ENCODE measurements at regions of chr6 and their contacts with region 1.

Region 1: GRCh38 chr6:150891888-150892485 is 26.5 kb downstream of the MTHFD1L start:
- DNase-seq: peak; percentile 47 to 79
- ATAC-seq: peak; percentile 62 to 79 (median 75)
- H3K4me3 ChIP-seq: no peak overlapping the region
- H3K27ac ChIP-seq: no peak overlapping the region
- H3K4me1 ChIP-seq: peaks cover 0 to 22% (median 11%) of the 10 kb centered on the region in 9 donors
- H3K27me3 ChIP-seq: no peaks in the 10 kb centered on the region
- CTCF ChIP-seq: peak; percentile 74 to 93 (median 86)

Region 2: DNA sequence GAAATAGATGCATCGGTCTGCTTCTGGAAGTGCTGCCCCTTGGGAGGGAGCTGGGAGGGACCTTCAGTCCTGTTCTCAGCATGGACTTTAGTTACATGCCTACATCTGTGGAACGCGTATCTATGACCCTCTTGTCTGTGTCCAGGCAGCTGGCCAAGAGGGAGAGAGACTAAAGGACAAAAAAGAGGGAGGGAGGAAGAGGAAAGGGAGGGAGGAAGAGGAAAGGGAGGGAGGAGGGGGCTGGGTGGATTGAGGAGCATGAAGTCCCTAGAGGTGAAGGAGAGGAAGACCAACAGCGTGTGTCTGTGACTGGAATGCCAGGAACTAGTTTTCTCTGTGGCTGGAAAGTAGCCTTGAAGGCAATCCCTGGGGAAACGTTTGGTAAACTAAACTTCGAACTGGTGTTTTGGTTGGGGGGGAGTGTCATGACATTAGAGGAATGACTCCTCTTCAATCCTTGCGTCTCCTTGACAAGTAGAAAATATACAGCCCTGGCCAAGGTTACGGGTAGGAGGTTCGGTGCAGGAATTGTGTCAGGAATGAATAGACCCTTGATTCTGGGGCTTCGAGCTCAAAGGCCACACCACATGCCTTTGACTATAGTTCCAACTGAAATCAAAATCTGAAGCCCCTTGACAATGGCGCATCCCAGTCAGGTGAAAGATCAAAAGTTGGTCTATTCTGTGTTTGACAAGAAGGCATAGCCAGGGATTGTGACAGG is 344.3 kb before region 1 on chr6:
- intact Hi-C with region 1: no loop called
- DNase-seq: peak; percentile 58 to 81
- ATAC-seq: peak; percentile 77 to 93 (median 88)
- H3K4me3 ChIP-seq: no peak overlapping the region
- H3K27ac ChIP-seq: peak overlapping the region in 1 of 10 donors; percentile 63
- H3K4me1 ChIP-seq: peaks cover 8 to 24% (median 15%) of the 10 kb centered on the region in 9 donors
- H3K27me3 ChIP-seq: peaks cover 0 to 4% (median 0%) of the 10 kb centered on the region in 7 donors
- CTCF ChIP-seq: no peak

Region 3: DNA sequence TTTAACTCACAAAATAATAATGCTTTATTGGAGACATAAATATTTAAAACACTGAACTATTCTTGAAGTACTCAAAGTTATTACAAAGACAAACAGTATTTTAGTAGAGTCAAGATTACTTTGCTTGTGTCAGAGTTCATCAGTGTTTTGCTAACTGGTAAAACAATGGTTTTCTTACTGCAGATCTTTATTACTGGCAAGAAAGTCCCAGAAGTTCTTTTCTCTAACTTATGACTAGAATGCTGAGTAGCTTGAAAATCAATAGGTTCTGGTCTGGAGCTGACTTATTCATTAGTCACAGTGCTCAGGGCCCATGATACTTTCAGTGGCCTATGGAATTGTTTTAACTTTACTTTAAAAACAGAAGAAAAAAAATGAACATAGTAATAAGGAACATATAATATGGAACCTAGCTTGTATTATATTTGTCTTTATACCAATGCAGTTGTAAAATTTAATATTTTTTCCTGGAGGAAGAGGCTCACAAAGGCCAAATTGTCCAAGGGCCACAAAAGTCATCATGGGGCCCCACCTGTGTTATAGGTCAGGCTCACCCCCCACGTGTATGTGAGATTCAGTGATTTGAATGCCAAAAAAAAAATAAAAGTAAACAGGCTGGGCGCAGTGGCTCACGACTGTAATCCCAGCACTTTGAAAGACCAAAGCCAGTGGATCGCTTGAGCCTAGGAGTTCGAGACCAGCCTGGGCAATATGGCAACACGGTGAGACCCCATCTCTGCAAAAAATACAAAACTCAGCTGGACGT is 239.0 kb before region 1 on chr6:
- intact Hi-C with region 1: no loop called
- DNase-seq: no peak
- ATAC-seq: no peak
- H3K4me3 ChIP-seq: no peak overlapping the region
- H3K27ac ChIP-seq: no peak overlapping the region
- H3K4me1 ChIP-seq: peaks cover 0 to 9% (median 0%) of the 10 kb centered on the region in 9 donors
- H3K27me3 ChIP-seq: no peaks in the 10 kb centered on the region
- CTCF ChIP-seq: no peak

Region 4: GRCh38 chr6:151004415-151005024 is 112.5 kb after region 1 on chr6:
- intact Hi-C with region 1: loop called in 3 of 10 experiments (anchors 5 to 10 kb)
- DNase-seq: peak in 1 of 2 donors; percentile 24
- ATAC-seq: peak; percentile 65 to 87 (median 81)
- H3K4me3 ChIP-seq: peak overlapping the region in 3 of 10 donors; percentile 1 to 9 (median 6)
- H3K27ac ChIP-seq: peak overlapping the region in 9 of 10 donors; percentile 41 to 83 (median 70)
- H3K4me1 ChIP-seq: peaks cover 0 to 39% (median 10%) of the 10 kb centered on the region in 9 donors
- H3K27me3 ChIP-seq: no peaks in the 10 kb centered on the region
- CTCF ChIP-seq: no peak

Region 5: DNA sequence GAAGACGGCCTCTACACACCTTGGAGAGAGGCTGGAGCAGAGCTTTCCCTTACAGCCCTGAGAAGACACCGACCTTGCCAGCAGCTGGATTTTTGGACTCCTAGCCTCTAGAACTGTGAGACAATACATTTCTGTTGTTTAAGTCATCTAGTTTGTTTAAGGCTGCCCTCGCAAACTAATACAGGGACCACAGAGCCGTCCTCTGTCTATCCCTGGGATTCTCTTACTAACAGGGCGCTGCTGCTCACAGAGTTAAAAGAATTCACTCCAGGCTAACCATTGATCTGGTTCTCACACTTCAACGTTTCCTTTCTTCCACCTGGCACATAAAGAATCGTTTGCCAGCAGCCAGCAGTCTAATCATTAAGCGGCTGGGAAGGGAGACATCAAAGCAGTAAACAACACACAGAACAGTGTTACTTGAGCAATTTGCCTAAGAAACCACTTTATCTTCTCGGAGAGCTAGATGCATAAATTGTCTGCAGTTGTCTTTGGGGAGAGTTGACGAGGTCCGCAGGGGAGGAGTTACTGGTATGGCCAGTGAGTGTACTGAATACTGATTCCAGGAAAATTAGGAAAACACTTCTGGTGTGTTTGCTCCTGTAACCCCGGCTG is 244.3 kb after region 1 on chr6:
- intact Hi-C with region 1: loop called in 1 of 10 experiments (anchors 10 kb)
- DNase-seq: no peak
- ATAC-seq: peak in 2 of 8 donors; percentile 26 to 40
- H3K4me3 ChIP-seq: no peak overlapping the region
- H3K27ac ChIP-seq: no peak overlapping the region
- H3K4me1 ChIP-seq: peaks cover 0 to 11% (median 4%) of the 10 kb centered on the region in 9 donors
- H3K27me3 ChIP-seq: no peaks in the 10 kb centered on the region
- CTCF ChIP-seq: no peak

Region 6: DNA sequence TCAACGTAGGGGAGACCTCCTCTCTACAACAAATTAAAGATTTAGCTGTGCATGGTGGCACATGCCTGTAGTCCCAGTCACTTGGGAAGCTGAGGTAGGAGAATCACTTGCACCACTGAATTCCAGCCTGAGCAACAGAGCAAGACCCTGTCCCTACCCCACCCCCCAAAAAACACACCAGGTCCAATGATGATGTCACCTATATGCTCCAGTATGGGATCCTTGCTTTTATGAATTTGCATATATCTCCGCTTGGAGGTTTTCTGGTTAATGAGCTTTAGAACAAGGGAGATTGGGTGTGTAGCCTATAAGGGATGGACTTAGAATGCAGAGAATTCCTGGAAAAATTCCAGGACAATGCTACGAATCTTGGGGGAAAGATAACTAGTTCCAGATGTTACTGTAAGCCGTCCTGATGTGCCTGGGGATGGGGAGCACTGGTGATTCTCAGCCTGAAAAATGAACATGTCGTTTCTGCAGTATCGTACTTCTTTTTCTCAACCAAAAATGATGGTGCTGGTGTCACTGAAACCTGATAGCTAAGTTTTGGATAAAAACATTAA is 438.2 kb after region 1 on chr6:
- intact Hi-C with region 1: loop called (anchors 1 to 5 kb)
- DNase-seq: no peak
- ATAC-seq: no peak
- H3K4me3 ChIP-seq: no peak overlapping the region
- H3K27ac ChIP-seq: no peak overlapping the region
- H3K4me1 ChIP-seq: peaks cover 0 to 13% (median 12%) of the 10 kb centered on the region in 9 donors
- H3K27me3 ChIP-seq: peaks cover 0 to 14% (median 2%) of the 10 kb centered on the region in 7 donors
- CTCF ChIP-seq: no peak

Region 7: DNA sequence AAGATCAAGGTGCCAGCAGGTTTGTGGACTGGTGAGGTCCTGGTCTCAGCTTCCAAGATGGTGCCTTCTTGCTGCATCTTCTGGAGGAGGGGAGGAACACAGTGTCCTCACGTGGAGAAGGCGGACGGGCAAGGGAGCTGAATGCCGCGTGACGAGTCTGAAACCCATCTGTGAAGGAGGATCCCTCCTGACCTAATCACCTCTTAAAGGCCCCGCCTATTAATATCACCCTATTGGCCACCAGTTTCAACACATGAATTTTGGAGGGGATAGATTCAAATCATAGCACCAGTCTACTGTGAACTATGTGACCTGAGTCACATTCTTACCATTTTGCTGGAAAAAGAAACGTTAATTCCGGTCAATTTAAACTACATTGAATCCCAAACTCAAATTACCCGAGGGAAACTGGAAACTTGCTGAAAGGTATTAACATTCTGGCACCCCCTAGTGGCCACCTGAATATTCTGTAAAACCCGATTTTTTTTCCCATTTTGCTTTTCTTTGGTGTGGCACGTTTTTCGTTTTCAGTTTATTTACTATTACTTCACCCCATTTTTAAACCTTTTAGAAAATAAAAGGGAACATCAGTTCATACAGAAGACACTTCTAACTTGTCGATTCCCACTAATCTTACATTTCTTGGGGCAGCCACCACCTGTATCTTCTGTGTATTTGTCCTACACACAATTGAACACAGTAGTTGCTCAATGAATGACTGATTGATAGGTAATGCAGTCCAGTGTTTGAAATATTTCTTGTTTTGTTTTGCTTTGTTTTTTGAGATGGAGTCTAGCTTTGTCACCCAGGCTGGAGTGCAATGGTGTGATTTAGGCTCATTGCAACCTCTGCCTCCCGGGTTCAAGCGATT is 583.9 kb after region 1 on chr6:
- intact Hi-C with region 1: loop called in 1 of 10 experiments (anchors 10 kb)
- DNase-seq: peak in 1 of 2 donors; percentile 43
- ATAC-seq: peak in 1 of 8 donors; percentile 35
- H3K4me3 ChIP-seq: peak overlapping the region in 4 of 10 donors; percentile 15 to 23 (median 18)
- H3K27ac ChIP-seq: no peak overlapping the region
- H3K4me1 ChIP-seq: peaks cover 0 to 9% (median 5%) of the 10 kb centered on the region in 9 donors
- H3K27me3 ChIP-seq: no peaks in the 10 kb centered on the region
- CTCF ChIP-seq: peak; percentile 66 to 87 (median 80)

Measured in heart right ventricle (tissue), 16 donors.